Right ventricle myocardium inferior (tissue), 1 donor: ENCODE measurements at regions of chr19 and their contacts with region 1.

Region 1: DNA sequence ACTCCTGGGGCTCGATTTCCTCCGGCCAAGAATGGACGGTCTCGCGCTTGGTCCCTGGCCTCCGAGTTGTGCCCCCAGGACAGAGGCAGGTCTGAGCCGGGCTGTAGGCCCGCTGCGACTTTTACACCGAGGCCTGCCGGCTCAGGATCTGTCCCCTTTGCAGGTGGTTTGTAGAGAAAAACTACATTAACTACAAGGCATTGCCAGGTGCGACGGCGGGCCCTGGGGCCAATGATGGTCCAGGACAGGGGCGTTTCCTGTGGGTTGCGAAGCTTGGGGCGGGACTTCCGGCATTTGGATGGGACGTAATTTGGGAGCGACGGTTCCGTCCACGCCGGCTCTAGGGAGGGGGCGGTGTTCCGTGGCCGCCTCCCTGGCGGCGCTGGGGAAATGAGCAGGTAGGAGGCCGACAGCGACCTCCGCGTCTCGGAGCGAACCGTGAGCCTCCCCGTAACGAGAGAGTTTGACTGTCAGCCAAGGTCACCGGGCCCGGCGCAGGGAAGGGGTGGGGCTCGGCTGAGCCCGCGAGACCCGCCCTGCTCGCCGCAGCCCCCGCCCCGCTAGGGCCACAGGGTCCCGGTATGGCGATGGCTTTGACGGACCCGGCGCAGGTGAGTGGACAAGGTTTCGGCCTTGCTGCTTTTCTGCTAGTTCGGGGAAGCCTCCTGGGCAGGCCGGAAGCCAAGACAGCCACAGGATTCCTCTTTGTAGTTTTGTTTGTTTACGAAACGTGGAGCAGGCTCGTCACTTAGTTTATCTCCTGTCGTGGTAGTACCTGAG is at the start of gene ZNF805:
- DNase-seq: peak; percentile 97
- ATAC-seq: peak; percentile 100
- total RNA-seq, gene ZNF805: 9.7 TPM

Region 2: GRCh38 chr19:57191141-57192076 is 49.1 kb before region 1 on chr19 and contains the start of gene ZNF264:
- intact Hi-C with region 1: loop called (anchors 2 kb)
- DNase-seq: peak; percentile 96
- ATAC-seq: peak; percentile 98
- total RNA-seq, gene ZNF264: 16.5 TPM

Region 3: DNA sequence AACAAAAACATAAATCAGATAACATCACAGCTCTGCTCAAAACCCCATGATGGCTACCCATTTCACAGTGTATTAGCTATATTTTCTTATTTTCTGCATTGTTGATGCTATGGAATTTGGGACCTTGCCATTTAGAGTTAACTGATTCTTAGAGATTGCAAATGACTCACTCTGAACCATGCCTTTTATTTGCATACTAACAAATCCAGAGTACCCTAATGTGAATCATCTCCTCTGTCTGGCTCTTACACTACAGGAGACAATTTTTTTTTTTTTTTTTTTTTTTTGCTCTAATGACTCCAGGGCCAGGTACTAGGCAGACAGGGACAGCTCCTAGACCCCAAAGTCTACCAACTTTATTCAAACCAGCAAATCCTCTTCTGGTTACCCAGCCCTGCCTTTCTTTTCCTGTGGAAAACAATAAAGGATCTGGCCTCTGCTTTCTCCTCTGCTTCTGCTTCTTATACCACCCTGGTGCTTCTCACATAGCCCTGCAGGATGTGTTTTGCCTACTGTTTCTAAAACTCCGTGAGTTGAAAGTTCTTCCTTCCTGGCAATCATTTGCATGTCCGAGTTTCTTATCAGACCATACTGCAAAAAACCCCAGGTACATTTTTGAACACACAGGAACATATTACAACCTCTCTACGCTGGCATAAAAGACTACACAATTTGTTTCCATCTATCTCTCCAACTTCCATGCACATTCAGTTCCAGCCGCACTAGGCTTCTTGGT is 29.2 kb after region 1 on chr19:
- intact Hi-C with region 1: no loop called
- DNase-seq: no peak
- ATAC-seq: no peak